ENCODE measurements at regions of chr1 and their contacts with region 1.

Region 1: DNA sequence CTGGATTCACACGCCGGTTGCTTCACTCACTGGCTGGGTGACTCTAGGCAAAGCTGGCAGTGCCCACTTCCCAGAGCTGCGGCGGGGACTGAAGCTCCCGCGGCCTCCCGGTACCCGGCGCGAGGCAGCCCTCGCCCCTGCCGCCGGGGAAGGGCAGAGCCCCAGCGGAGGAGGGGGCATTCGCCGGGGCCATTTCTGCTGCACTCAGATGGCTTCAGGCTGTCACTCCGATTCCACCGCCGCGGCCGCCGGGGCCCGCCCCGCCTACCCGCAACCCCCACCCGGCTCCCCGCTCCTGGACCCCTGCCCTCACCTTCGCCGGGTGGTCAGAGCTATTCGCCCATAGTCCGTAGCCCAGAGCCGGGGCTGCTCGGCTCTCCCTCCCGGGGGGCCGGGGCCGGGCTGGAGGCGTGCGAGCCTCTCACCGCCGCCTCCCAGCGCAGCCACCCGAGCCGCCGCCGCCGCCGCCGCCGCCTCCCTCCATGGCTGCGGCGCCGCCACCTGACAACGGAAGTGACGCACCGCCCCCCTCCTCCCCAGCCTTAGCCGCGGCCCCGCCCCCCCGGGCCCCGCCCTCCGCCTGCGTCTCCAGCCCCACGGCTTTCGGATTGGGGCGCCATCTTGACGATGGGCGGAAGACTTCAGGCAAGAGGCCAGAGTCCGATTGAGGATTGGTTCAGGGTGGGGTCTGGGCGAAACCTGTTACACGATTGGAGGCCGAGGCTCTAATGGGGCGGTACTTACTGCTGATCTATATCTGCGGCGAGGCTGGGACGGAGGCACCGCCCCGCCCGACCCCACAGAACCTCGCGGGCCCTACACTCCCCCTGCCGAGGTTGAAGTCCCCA is at the start of gene STK40:
- DNase-seq: peak; percentile 97 to 99 (median 98)
- ATAC-seq: peak; percentile 85
- H3K4me3 ChIP-seq: peak within 1 kb of the TSS; percentile 87 to 89
- H3K4me3 Mint-ChIP-seq: peak within 1 kb of the TSS; percentile 88
- H3K27ac ChIP-seq: peak within 1 kb of the TSS; percentile 78 to 92
- H3K27ac Mint-ChIP-seq: peak within 1 kb of the TSS; percentile 98
- H3K4me1 ChIP-seq: peaks cover 27% of the 10 kb centered on the region
- H3K4me1 Mint-ChIP-seq: peaks cover 46% of the 10 kb centered on the region
- H3K27me3 ChIP-seq: no peaks in the 10 kb centered on the region
- H3K27me3 Mint-ChIP-seq: no peaks in the 10 kb centered on the region
- CTCF ChIP-seq: no peak
- total RNA-seq, gene STK40: 13.4 to 16.9 TPM

Region 2: DNA sequence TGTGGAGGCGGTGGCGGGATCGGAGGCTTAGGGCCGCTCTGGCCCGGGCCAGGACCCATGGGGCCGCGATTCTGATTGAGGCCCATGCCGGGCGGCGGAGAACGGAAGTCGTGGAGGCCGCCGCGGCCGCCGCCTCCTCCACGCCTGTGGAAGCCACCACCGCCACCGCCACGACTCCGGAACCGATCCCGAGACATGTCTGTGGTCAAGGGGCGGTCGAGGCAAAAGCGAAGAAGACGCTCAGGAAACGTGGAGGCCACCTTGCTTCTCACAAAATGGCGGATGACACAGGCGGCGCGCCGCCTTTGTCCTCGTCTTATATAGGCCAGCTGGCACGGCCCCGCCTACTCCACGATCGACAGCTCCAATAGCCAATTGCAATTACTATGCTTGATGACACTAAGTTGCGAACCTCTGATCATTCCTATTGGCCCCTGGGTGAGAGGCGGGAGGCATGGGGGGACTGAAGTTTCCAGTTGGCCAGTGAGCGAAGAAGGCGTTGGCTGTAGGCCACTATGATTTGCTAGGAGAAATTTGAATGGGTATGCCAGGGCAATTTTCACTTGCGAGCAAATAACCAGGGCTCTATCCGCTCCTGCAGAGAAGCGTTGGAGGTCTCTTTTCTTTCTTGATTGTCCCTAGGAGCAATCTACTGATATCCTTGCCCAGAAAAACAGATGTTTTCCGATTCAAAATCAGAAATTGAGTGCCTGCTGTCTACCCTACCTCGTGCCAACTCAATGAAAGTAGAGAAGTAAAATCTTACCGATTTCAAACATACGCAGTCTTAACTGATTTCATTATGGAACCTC is 1192.6 kb before region 1 on chr1 and contains the start of gene SFPQ:
- CTCF ChIA-PET with region 1: no interaction called
- POLR2A ChIA-PET with region 1: no interaction called
- intact Hi-C with region 1: loop called in 1 of 2 experiments (anchors 5 kb)
- DNase-seq: peak; percentile 96 to 99 (median 97)
- ATAC-seq: peak; percentile 87
- H3K4me3 ChIP-seq: peak within 1 kb of the TSS; percentile 59 to 81
- H3K4me3 Mint-ChIP-seq: peak within 1 kb of the TSS; percentile 95
- H3K27ac ChIP-seq: peak within 1 kb of the TSS; percentile 92 to 97
- H3K27ac Mint-ChIP-seq: peak within 1 kb of the TSS; percentile 99
- H3K4me1 ChIP-seq: peaks cover 36% of the 10 kb centered on the region
- H3K4me1 Mint-ChIP-seq: peaks cover 44% of the 10 kb centered on the region
- H3K27me3 ChIP-seq: no peaks in the 10 kb centered on the region
- H3K27me3 Mint-ChIP-seq: no peaks in the 10 kb centered on the region
- CTCF ChIP-seq: no peak
- total RNA-seq, gene SFPQ: 801 to 841 TPM

Region 3: GRCh38 chr1:36223993-36224536 is 161.6 kb before region 1 on chr1 and contains the start of gene THRAP3:
- CTCF ChIA-PET with region 1: no interaction called
- POLR2A ChIA-PET with region 1: no interaction called
- intact Hi-C with region 1: loop called in 1 of 2 experiments (anchors 1 kb)
- DNase-seq: peak; percentile 99 to 100 (median 100)
- ATAC-seq: peak; percentile 86
- H3K4me3 ChIP-seq: peak within 1 kb of the TSS; percentile 86 to 87
- H3K4me3 Mint-ChIP-seq: peak within 1 kb of the TSS; percentile 97
- H3K27ac ChIP-seq: peak within 1 kb of the TSS; percentile 97 to 100
- H3K27ac Mint-ChIP-seq: peak within 1 kb of the TSS; percentile 100
- H3K4me1 ChIP-seq: peaks cover 34% of the 10 kb centered on the region
- H3K4me1 Mint-ChIP-seq: peaks cover 34% of the 10 kb centered on the region
- H3K27me3 ChIP-seq: no peaks in the 10 kb centered on the region
- H3K27me3 Mint-ChIP-seq: no peaks in the 10 kb centered on the region
- CTCF ChIP-seq: no peak
- total RNA-seq, gene THRAP3: 83.2 to 88.4 TPM

Region 4: GRCh38 chr1:36342481-36343478 is 42.9 kb before region 1 on chr1:
- CTCF ChIA-PET with region 1: interaction called, 38 read pairs
- POLR2A ChIA-PET with region 1: no interaction called
- intact Hi-C with region 1: loop called in 1 of 2 experiments (anchors 1 kb)
- DNase-seq: peak; percentile 36 to 80 (median 68)
- ATAC-seq: peak; percentile 87
- H3K4me3 ChIP-seq: no peak overlapping the region
- H3K4me3 Mint-ChIP-seq: no peak overlapping the region
- H3K27ac ChIP-seq: no peak overlapping the region
- H3K27ac Mint-ChIP-seq: no peak overlapping the region
- H3K4me1 ChIP-seq: peaks cover 3% of the 10 kb centered on the region
- H3K4me1 Mint-ChIP-seq: peaks cover 13% of the 10 kb centered on the region
- H3K27me3 ChIP-seq: no peaks in the 10 kb centered on the region
- H3K27me3 Mint-ChIP-seq: no peaks in the 10 kb centered on the region
- CTCF ChIP-seq: peak; percentile 69

Region 5: DNA sequence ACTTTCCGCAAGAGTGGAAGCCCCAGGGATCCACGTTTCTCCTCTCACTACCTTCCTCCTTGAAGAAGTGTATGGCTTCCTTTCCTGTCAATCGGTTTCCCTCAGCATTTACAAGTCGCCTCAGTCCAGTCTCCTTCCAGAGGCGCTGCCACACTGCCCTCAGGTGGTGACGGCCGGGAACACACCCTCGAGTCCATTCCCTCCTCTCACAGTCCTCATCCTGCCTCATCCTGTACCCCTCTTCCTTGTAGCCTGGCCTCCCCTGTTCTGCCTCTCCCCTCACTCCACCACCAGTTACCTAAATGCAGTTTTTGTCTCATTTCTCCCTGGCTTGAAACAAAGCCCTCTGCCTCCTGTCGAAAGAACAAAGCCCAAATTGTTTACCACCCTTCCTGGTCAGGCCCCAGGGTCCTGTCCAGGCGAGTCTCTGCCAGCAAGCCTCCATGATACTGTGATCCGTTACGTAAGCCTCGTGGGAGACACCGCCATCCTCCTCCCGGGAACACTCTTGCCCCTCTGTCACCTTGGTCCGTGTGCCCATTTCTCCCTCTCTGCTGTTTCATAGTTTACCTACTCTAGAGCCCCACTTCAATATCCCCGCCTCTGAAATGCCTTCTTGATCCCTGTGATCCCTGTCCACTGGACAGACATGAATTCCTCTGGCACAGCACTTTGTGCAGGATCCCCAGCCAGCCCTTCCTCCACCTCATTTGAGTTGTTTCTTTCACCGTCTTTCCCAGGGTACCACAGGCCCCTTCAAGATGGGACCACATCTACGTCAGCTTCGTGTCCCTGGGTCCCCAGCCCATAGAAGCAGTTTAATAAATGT is 35.4 kb after region 1 on chr1:
- CTCF ChIA-PET with region 1: interaction called, 5 read pairs
- POLR2A ChIA-PET with region 1: interaction called, 3 read pairs
- intact Hi-C with region 1: loop called in 1 of 2 experiments (anchors 1 kb)
- DNase-seq: peak; percentile 82 to 96 (median 89)
- ATAC-seq: peak; percentile 100
- H3K4me3 ChIP-seq: peak overlapping the region in 1 of 2 experiments; percentile 7
- H3K4me3 Mint-ChIP-seq: peak overlapping the region; percentile 64
- H3K27ac ChIP-seq: peak overlapping the region in 1 of 2 experiments; percentile 60
- H3K27ac Mint-ChIP-seq: peak overlapping the region; percentile 88
- H3K4me1 ChIP-seq: peaks cover 18% of the 10 kb centered on the region
- H3K4me1 Mint-ChIP-seq: peaks cover 23% of the 10 kb centered on the region
- H3K27me3 ChIP-seq: no peaks in the 10 kb centered on the region
- H3K27me3 Mint-ChIP-seq: no peaks in the 10 kb centered on the region
- CTCF ChIP-seq: peak; percentile 87

Region 6: GRCh38 chr1:37931361-37932158 is 1545.9 kb after region 1 on chr1:
- CTCF ChIA-PET with region 1: no interaction called
- POLR2A ChIA-PET with region 1: no interaction called
- intact Hi-C with region 1: loop called in 1 of 2 experiments (anchors 5 kb)
- DNase-seq: peak; percentile 96 to 98 (median 97)
- ATAC-seq: peak; percentile 98
- H3K4me3 ChIP-seq: peak overlapping the region; percentile 79 to 89
- H3K4me3 Mint-ChIP-seq: peak overlapping the region; percentile 100
- H3K27ac ChIP-seq: peak overlapping the region; percentile 40 to 66
- H3K27ac Mint-ChIP-seq: peak overlapping the region; percentile 89
- H3K4me1 ChIP-seq: peaks cover 26% of the 10 kb centered on the region
- H3K4me1 Mint-ChIP-seq: peaks cover 40% of the 10 kb centered on the region
- H3K27me3 ChIP-seq: no peaks in the 10 kb centered on the region
- H3K27me3 Mint-ChIP-seq: no peaks in the 10 kb centered on the region
- CTCF ChIP-seq: no peak

Measured in CD8-positive, alpha-beta T cell (primary cell).